ENCODE measurements at regions of chr4 and their contacts with region 1.

Region 1: GRCh38 chr4:86927843-86928395 is 6.9 kb upstream of the AFF1 start:
- DNase-seq: peak in 1 of 6 donors; percentile 37
- ATAC-seq: peak; percentile 72 to 88 (median 86)
- H3K4me3 ChIP-seq: no peak overlapping the region
- H3K27ac ChIP-seq: peak overlapping the region in 1 of 4 donors; percentile 75
- H3K4me1 ChIP-seq: peaks cover 0 to 11% (median 0%) of the 10 kb centered on the region in 3 donors
- H3K27me3 ChIP-seq: no peaks in the 10 kb centered on the region
- CTCF ChIP-seq: no peak

Region 2: GRCh38 chr4:85869181-85869580 is 1058.7 kb before region 1 on chr4:
- intact Hi-C with region 1: no loop called
- DNase-seq: no peak
- ATAC-seq: no peak
- H3K4me3 ChIP-seq: no peak overlapping the region
- H3K27ac ChIP-seq: peak overlapping the region in 1 of 4 donors; percentile 45
- H3K4me1 ChIP-seq: peaks cover 11 to 29% (median 28%) of the 10 kb centered on the region in 3 donors
- H3K27me3 ChIP-seq: no peaks in the 10 kb centered on the region
- CTCF ChIP-seq: no peak

Region 3: DNA sequence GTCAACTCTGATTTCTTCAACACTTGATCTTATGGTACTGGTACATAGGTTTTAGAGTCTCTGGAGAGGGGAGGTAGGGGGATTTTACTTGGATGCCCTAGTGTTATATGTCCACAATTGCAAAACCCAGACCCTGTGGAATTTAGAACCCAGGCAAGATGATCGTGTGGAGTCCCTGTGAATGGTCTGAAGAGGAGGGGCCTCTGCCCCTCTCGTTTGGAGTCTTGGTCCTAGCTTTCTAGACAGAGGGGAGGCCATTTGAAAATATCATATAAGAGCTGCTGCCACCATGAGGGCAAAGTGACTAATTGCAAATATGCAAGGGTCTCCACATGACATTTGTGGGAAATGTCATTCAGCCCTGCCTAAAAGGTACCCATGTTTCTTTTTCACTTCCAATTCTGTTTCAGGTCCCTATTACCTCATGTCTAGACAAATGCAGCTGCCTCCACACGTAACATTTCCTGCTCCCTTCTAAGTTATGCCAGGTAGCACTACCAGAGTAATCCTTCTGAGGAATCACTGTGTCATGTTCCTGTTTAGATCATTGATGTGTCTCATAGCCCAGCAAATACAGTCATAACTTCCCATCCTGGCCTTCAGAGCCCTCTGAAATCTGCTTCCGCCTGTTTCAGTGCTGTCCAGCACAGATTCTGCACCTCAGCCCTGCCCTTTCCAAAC is 165.7 kb after region 1 on chr4:
- intact Hi-C with region 1: loop called in 1 of 3 experiments (anchors 5 kb)
- DNase-seq: peak in 2 of 6 donors; percentile 19 to 37
- ATAC-seq: peak; percentile 69 to 84 (median 82)
- H3K4me3 ChIP-seq: no peak overlapping the region
- H3K27ac ChIP-seq: peak overlapping the region in 2 of 4 donors; percentile 41 to 42
- H3K4me1 ChIP-seq: peaks cover 0 to 24% (median 16%) of the 10 kb centered on the region in 3 donors
- H3K27me3 ChIP-seq: no peaks in the 10 kb centered on the region
- CTCF ChIP-seq: peak in 2 of 4 donors; percentile 35 to 39

Region 4: GRCh38 chr4:87118826-87119225 is 190.9 kb after region 1 on chr4:
- intact Hi-C with region 1: loop called in 1 of 3 experiments (anchors 10 kb)
- DNase-seq: no peak
- ATAC-seq: peak in 1 of 4 donors; percentile 12
- H3K4me3 ChIP-seq: no peak overlapping the region
- H3K27ac ChIP-seq: no peak overlapping the region
- H3K4me1 ChIP-seq: peaks cover 0 to 6% (median 4%) of the 10 kb centered on the region in 3 donors
- H3K27me3 ChIP-seq: no peaks in the 10 kb centered on the region
- CTCF ChIP-seq: no peak

Region 5: GRCh38 chr4:87204559-87204958 is 276.6 kb after region 1 on chr4:
- intact Hi-C with region 1: no loop called
- DNase-seq: no peak
- ATAC-seq: no peak
- H3K4me3 ChIP-seq: no peak overlapping the region
- H3K27ac ChIP-seq: no peak overlapping the region
- H3K4me1 ChIP-seq: no peaks in the 10 kb centered on the region
- H3K27me3 ChIP-seq: no peaks in the 10 kb centered on the region
- CTCF ChIP-seq: no peak

Measured in pancreas (tissue), 10 donors.